Activated naive CD4-positive, alpha-beta T cell treated with anti-CD3 and anti-CD28 coated beads for 36 hours (primary cell): ENCODE measurements at regions of chrX and their contacts with region 1.

Region 1: GRCh38 chrX:70030301-70030767 is 19.4 kb downstream of the AWAT2 start:
- DNase-seq: peak; percentile 60
- H3K4me3 Mint-ChIP-seq: no peak overlapping the region
- H3K27ac Mint-ChIP-seq: no peak overlapping the region
- H3K4me1 Mint-ChIP-seq: peaks cover 26% of the 10 kb centered on the region
- H3K27me3 Mint-ChIP-seq: no peaks in the 10 kb centered on the region

Region 2: DNA sequence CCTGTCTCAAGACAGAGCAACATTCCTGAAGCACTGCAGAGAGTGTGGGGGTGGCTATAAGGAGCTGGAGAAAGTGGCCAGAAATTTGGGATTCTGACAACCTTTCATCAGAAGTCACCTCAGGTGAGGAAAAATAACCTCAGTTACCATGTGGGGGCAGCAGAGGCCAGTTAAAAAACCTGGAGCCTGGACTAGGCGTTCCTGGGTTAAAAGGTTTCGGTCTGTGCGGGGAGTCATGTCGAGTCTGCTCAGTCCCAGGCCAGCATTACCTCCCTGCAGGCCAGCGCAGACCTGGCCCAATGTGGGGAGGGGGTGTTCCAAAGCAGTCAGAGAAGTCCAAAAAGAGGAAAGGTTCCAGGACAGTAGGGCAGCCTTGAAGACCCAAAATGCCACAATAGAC is 537.1 kb before region 1 on chrX:
- CTCF ChIA-PET with region 1: interaction called, 3 read pairs
- intact Hi-C with region 1: loop called (anchors 1 kb)
- DNase-seq: peak; percentile 54
- H3K4me3 Mint-ChIP-seq: no peak overlapping the region
- H3K27ac Mint-ChIP-seq: no peak overlapping the region
- H3K4me1 Mint-ChIP-seq: no peaks in the 10 kb centered on the region
- H3K27me3 Mint-ChIP-seq: peaks cover 10% of the 10 kb centered on the region

Region 3: DNA sequence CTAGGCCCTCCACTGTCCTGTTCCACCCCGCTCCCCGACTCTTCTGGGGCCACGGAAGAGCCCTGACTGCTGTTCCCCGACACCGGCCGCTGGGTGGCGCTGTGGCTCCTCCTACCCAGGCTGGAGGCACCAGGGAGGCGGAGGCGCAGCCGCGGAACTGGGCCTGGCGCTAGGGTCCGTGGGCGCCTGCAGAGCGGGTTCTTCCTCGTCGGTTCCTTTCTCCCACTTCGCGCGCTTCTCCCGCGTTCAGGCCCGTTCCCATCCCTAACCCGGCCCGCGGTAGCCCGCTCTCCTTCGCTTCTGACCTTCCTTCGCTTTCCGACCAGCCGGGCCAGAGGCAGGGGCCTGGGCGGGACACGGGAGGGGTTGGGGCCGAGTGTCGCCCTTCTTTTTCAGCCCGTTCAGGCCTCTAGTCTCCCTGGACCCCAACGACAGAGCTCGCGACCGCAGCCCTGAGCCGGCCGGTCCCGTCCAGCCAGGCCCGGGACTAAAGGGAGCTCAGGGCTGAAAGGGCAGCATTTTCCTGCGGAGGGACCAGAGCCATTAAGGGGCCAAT is 491.9 kb before region 1 on chrX:
- CTCF ChIA-PET with region 1: interaction called, 26 read pairs
- intact Hi-C with region 1: loop called (anchors 1 kb)
- DNase-seq: peak; percentile 79
- H3K4me3 Mint-ChIP-seq: peak overlapping the region; percentile 43
- H3K27ac Mint-ChIP-seq: no peak overlapping the region
- H3K4me1 Mint-ChIP-seq: peaks cover 10% of the 10 kb centered on the region
- H3K27me3 Mint-ChIP-seq: peaks cover 2% of the 10 kb centered on the region

Region 4: GRCh38 chrX:70096052-70096451 is 65.7 kb after region 1 on chrX:
- CTCF ChIA-PET with region 1: interaction called, 26 read pairs
- intact Hi-C with region 1: loop called (anchors 2 kb)
- DNase-seq: peak; percentile 5
- H3K4me3 Mint-ChIP-seq: no peak overlapping the region
- H3K27ac Mint-ChIP-seq: no peak overlapping the region
- H3K4me1 Mint-ChIP-seq: no peaks in the 10 kb centered on the region
- H3K27me3 Mint-ChIP-seq: peaks cover 5% of the 10 kb centered on the region

Region 5: DNA sequence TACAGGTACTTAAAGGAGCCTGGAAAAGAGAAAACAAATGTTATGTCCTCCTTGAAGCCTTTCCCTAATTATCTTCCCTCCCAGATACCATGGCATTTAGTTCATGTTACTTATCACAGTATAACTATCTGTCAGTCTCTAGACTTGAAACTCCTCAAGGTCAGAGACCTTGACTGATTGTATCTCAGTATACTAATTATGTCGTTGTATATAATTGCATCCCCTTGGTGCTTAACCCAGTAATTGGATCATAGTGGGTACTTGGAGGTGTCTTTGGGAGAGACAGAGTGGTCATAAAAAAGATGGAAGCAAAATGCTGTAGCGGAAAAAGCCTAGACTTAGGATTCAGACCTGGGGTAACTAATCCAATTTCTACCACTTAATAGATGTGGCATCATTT is 111.0 kb after region 1 on chrX:
- CTCF ChIA-PET with region 1: no interaction called
- intact Hi-C with region 1: no loop called
- DNase-seq: no peak
- H3K4me3 Mint-ChIP-seq: no peak overlapping the region
- H3K27ac Mint-ChIP-seq: no peak overlapping the region
- H3K4me1 Mint-ChIP-seq: peaks cover 7% of the 10 kb centered on the region
- H3K27me3 Mint-ChIP-seq: no peaks in the 10 kb centered on the region

Region 6: GRCh38 chrX:70433848-70434351 is 403.6 kb after region 1 on chrX:
- CTCF ChIA-PET with region 1: no interaction called
- intact Hi-C with region 1: loop called (anchors 2 kb)
- DNase-seq: peak; percentile 80
- H3K4me3 Mint-ChIP-seq: peak overlapping the region; percentile 84
- H3K27ac Mint-ChIP-seq: peak overlapping the region; percentile 50
- H3K4me1 Mint-ChIP-seq: peaks cover 7% of the 10 kb centered on the region
- H3K27me3 Mint-ChIP-seq: peaks cover 11% of the 10 kb centered on the region

Region 7: DNA sequence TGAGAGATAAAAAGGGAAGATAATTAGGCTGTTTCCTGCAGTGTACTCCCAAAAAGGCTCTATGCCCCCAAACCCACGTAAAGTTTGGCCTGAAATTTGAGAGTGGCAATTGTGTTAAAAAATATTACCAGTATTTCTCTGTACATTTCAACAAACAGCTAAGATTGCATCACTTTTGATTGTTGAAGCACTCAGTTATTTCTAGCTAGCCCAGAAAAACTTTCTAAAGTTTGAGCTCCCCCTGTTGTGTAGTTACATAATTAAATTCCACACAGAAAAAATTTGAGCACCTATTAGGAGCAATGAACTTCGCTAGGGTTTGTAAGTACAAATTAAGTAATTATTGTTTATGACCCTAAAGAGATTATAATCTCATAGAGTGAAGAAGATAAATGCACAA is 523.7 kb after region 1 on chrX:
- CTCF ChIA-PET with region 1: no interaction called
- intact Hi-C with region 1: no loop called
- DNase-seq: no peak
- H3K4me3 Mint-ChIP-seq: no peak overlapping the region
- H3K27ac Mint-ChIP-seq: no peak overlapping the region
- H3K4me1 Mint-ChIP-seq: peaks cover 7% of the 10 kb centered on the region
- H3K27me3 Mint-ChIP-seq: no peaks in the 10 kb centered on the region